Activated CD8-positive, alpha-beta T cell treated with anti-CD3 and anti-CD28 coated beads for 36 hours (primary cell): ENCODE measurements at regions of chr18 and their contacts with region 1.

Region 1: GRCh38 chr18:63016270-63016669 is 300.9 kb downstream of the PHLPP1 start:
- DNase-seq: peak; percentile 62
- ATAC-seq: peak; percentile 62
- H3K4me3 Mint-ChIP-seq: no peak overlapping the region
- H3K27ac Mint-ChIP-seq: no peak overlapping the region
- H3K4me1 Mint-ChIP-seq: no peaks in the 10 kb centered on the region
- H3K27me3 Mint-ChIP-seq: peaks cover 9% of the 10 kb centered on the region
- CTCF ChIP-seq: peak; percentile 89

Region 2: GRCh38 chr18:63005306-63005705 is 11.0 kb before region 1 on chr18:
- CTCF ChIA-PET with region 1: interaction called, 12 read pairs
- POLR2A ChIA-PET with region 1: no interaction called
- intact Hi-C with region 1: no loop called
- DNase-seq: no peak
- ATAC-seq: no peak
- H3K4me3 Mint-ChIP-seq: no peak overlapping the region
- H3K27ac Mint-ChIP-seq: no peak overlapping the region
- H3K4me1 Mint-ChIP-seq: no peaks in the 10 kb centered on the region
- H3K27me3 Mint-ChIP-seq: no peaks in the 10 kb centered on the region
- CTCF ChIP-seq: no peak

Region 3: GRCh38 chr18:63119647-63120046 is 103.4 kb after region 1 on chr18:
- CTCF ChIA-PET with region 1: interaction called, 14 read pairs
- POLR2A ChIA-PET with region 1: no interaction called
- intact Hi-C with region 1: loop called (anchors 10 kb)
- DNase-seq: peak; percentile 53
- ATAC-seq: peak; percentile 67
- H3K4me3 Mint-ChIP-seq: no peak overlapping the region
- H3K27ac Mint-ChIP-seq: no peak overlapping the region
- H3K4me1 Mint-ChIP-seq: peaks cover 5% of the 10 kb centered on the region
- H3K27me3 Mint-ChIP-seq: peaks cover 10% of the 10 kb centered on the region
- CTCF ChIP-seq: peak; percentile 23

Region 4: GRCh38 chr18:63155169-63155852 is 139.0 kb after region 1 on chr18:
- CTCF ChIA-PET with region 1: interaction called, 7 read pairs
- POLR2A ChIA-PET with region 1: interaction called, 6 read pairs
- intact Hi-C with region 1: loop called (anchors 10 kb)
- DNase-seq: peak; percentile 92
- ATAC-seq: peak; percentile 62
- H3K4me3 Mint-ChIP-seq: peak overlapping the region; percentile 85
- H3K27ac Mint-ChIP-seq: peak overlapping the region; percentile 99
- H3K4me1 Mint-ChIP-seq: peaks cover 97% of the 10 kb centered on the region
- H3K27me3 Mint-ChIP-seq: no peaks in the 10 kb centered on the region
- CTCF ChIP-seq: peak; percentile 91

Region 5: DNA sequence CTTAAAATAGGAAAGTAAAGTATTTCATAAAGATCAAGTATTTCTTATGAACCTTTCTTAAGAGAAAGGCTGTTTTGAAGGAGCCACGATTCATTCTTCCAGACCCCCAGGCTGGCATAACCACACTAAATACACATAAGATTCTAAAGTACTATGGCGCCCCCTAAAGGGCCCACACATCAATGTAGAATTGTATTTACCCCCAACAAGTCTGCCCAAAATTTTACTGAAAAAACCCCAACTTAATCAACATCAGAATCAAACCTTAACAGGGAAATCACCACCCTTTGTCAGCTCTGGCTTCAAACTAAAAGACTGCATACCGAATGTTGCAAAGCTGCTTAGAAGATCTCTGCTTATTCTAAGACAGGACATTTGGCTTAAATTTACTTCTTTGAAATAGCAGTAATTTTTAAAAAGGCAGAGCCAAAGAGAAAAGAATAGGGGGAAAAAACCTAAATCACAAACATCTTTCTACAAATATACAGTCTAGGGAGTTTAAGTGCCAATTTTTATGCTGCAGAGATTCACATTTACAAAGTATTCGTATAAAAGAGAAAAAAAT is 323.7 kb after region 1 on chr18:
- CTCF ChIA-PET with region 1: interaction called, 59 read pairs
- POLR2A ChIA-PET with region 1: no interaction called
- intact Hi-C with region 1: loop called (anchors 5 kb)
- DNase-seq: peak; percentile 75
- ATAC-seq: peak; percentile 66
- H3K4me3 Mint-ChIP-seq: no peak overlapping the region
- H3K27ac Mint-ChIP-seq: no peak overlapping the region
- H3K4me1 Mint-ChIP-seq: peaks cover 10% of the 10 kb centered on the region
- H3K27me3 Mint-ChIP-seq: no peaks in the 10 kb centered on the region
- CTCF ChIP-seq: peak; percentile 73